ENCODE measurements at regions of chr7 and their contacts with region 1.

Region 1: GRCh38 chr7:91880413-91881241 is at the start of gene MTERF1:
- DNase-seq: peak; percentile 88 to 97 (median 92)
- ATAC-seq: peak; percentile 95
- H3K4me3 ChIP-seq: peak within 1 kb of the TSS; percentile 78
- H3K4me3 Mint-ChIP-seq: peak within 1 kb of the TSS; percentile 96
- H3K27ac ChIP-seq: peak within 1 kb of the TSS; percentile 26 to 64
- H3K27ac Mint-ChIP-seq: peak within 1 kb of the TSS; percentile 87
- H3K4me1 ChIP-seq: peaks cover 20% of the 10 kb centered on the region
- H3K4me1 Mint-ChIP-seq: peaks cover 41% of the 10 kb centered on the region
- H3K27me3 ChIP-seq: no peaks in the 10 kb centered on the region
- H3K27me3 Mint-ChIP-seq: no peaks in the 10 kb centered on the region
- CTCF ChIP-seq: peak; percentile 98
- total RNA-seq, gene MTERF1: 11.0 to 11.9 TPM

Region 2: GRCh38 chr7:91082852-91083495 is 797.7 kb before region 1 on chr7:
- CTCF ChIA-PET with region 1: no interaction called
- POLR2A ChIA-PET with region 1: no interaction called
- intact Hi-C with region 1: loop called (anchors 2 to 5 kb)
- DNase-seq: peak in 4 of 14 experiments; percentile 8 to 47 (median 22)
- ATAC-seq: no peak
- H3K4me3 ChIP-seq: no peak overlapping the region
- H3K4me3 Mint-ChIP-seq: peak overlapping the region; percentile 30
- H3K27ac ChIP-seq: no peak overlapping the region
- H3K27ac Mint-ChIP-seq: peak overlapping the region; percentile 74
- H3K4me1 ChIP-seq: peaks cover 21% of the 10 kb centered on the region
- H3K4me1 Mint-ChIP-seq: peaks cover 36% of the 10 kb centered on the region
- H3K27me3 ChIP-seq: no peaks in the 10 kb centered on the region
- H3K27me3 Mint-ChIP-seq: no peaks in the 10 kb centered on the region
- CTCF ChIP-seq: peak; percentile 66

Region 3: DNA sequence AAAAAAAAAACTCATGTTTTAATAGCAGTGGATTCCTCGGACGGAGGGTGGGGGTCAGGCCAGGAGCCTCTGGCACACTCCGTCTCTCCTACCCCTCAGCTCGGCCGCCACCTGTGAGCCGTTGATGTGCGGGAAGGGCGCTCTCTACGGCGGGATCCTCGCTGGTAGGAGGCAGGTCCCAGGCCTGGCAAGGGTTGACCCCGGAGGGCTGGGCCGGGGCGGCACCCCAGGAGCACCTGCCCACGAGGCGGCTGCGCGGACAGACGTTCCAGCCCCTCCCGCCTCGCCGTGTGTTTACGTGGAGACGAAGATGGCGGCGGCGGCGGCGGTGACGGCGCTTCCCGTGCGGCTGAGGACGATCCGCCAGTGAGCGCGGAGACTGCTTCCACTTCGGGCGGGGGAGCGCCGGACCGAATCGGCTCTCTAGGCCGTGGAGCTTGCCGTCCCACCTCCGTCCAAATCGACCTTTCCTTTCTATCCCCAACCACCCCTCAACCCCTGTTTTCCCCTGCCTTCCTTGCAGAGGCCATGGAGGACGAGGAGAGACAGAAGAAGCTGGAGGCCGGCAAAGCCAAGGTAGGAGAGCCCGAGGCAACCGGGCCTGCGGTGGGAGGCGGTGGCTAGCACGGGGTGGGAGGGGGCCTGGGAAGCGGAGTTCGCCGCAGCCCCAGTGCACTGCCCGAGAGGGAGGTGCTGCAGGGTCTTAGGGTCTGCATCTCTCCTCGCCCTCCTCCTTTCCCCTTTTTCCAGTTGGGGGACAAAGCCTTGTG is 60.1 kb after region 1 on chr7 and contains the start of gene AKAP9:
- CTCF ChIA-PET with region 1: interaction called, 26 read pairs
- POLR2A ChIA-PET with region 1: interaction called, 47 read pairs
- intact Hi-C with region 1: loop called (anchors 1 to 2 kb)
- DNase-seq: peak; percentile 77 to 94 (median 84)
- ATAC-seq: peak; percentile 88
- H3K4me3 ChIP-seq: peak within 1 kb of the TSS; percentile 96
- H3K4me3 Mint-ChIP-seq: peak within 1 kb of the TSS; percentile 90
- H3K27ac ChIP-seq: peak within 1 kb of the TSS; percentile 82 to 93
- H3K27ac Mint-ChIP-seq: peak within 1 kb of the TSS; percentile 92
- H3K4me1 ChIP-seq: peaks cover 25% of the 10 kb centered on the region
- H3K4me1 Mint-ChIP-seq: peaks cover 49% of the 10 kb centered on the region
- H3K27me3 ChIP-seq: no peaks in the 10 kb centered on the region
- H3K27me3 Mint-ChIP-seq: no peaks in the 10 kb centered on the region
- CTCF ChIP-seq: no peak
- total RNA-seq, gene AKAP9: 62.5 to 64.8 TPM

Region 4: GRCh38 chr7:92002720-92003119 is 122.1 kb after region 1 on chr7:
- CTCF ChIA-PET with region 1: no interaction called
- POLR2A ChIA-PET with region 1: no interaction called
- intact Hi-C with region 1: no loop called
- DNase-seq: no peak
- ATAC-seq: no peak
- H3K4me3 ChIP-seq: no peak overlapping the region
- H3K4me3 Mint-ChIP-seq: no peak overlapping the region
- H3K27ac ChIP-seq: no peak overlapping the region
- H3K27ac Mint-ChIP-seq: no peak overlapping the region
- H3K4me1 ChIP-seq: no peaks in the 10 kb centered on the region
- H3K4me1 Mint-ChIP-seq: no peaks in the 10 kb centered on the region
- H3K27me3 ChIP-seq: no peaks in the 10 kb centered on the region
- H3K27me3 Mint-ChIP-seq: no peaks in the 10 kb centered on the region
- CTCF ChIP-seq: no peak

Region 5: DNA sequence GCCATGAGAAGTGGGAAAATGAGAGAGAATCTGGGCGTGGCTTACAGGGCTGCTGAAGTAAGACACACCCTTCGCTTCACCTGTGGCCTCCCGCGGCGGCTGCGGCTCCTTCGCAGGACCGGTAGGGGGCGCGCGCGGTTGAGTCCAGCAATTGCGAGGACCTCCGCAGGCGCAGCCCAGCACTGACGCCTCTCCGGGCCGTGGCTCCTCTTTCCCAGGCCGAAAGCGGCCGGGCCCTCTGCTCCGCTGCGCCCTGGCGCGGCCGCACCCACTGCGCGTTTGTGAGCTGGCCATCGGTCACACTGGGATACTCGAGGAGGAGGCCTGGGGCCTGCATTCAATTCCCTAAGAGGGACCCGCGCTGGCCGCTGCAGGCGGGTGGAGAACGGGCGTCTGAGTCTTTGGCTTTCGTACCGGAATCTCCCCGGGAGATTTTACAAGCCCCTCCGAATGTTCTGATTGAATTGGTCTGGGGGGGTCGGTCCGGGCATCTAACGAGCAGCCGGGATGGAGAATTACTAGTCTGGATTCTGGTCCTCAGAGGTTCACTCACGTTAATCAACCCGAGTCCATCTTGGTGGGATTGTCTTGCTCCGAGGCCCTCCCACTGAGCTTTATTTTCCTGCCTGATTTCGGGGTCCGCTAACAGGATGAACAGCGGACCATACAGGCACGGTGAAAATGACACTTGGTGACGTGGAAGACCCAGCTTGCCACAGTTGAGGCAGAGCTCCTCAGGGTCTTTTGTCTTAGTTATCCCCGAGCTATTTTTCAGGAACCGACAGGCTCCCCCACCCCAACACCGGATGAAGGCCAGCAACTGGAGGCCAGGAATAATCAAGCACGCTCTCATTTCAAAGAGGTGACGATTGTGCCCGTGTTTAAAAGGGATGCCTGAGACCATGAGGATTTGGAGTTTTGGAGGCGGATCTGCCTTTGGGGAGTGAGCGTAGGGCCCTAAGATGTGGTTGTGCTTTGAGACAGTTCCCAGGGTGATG is 298.6 kb after region 1 on chr7 and contains the start of gene LRRD1:
- CTCF ChIA-PET with region 1: no interaction called
- POLR2A ChIA-PET with region 1: no interaction called
- intact Hi-C with region 1: loop called in 1 of 2 experiments (anchors 5 kb)
- DNase-seq: peak; percentile 78 to 93 (median 88)
- ATAC-seq: peak; percentile 99
- H3K4me3 ChIP-seq: peak within 1 kb of the TSS; percentile 58
- H3K4me3 Mint-ChIP-seq: peak within 1 kb of the TSS; percentile 84
- H3K27ac ChIP-seq: no peak within 1 kb of the TSS
- H3K27ac Mint-ChIP-seq: no peak within 1 kb of the TSS
- H3K4me1 ChIP-seq: peaks cover 11% of the 10 kb centered on the region
- H3K4me1 Mint-ChIP-seq: peaks cover 14% of the 10 kb centered on the region
- H3K27me3 ChIP-seq: peaks cover 0 to 2% of the 10 kb centered on the region in 2 experiments
- H3K27me3 Mint-ChIP-seq: peaks cover 7% of the 10 kb centered on the region
- CTCF ChIP-seq: peak; percentile 98
- total RNA-seq, gene LRRD1: not detected

Region 6: DNA sequence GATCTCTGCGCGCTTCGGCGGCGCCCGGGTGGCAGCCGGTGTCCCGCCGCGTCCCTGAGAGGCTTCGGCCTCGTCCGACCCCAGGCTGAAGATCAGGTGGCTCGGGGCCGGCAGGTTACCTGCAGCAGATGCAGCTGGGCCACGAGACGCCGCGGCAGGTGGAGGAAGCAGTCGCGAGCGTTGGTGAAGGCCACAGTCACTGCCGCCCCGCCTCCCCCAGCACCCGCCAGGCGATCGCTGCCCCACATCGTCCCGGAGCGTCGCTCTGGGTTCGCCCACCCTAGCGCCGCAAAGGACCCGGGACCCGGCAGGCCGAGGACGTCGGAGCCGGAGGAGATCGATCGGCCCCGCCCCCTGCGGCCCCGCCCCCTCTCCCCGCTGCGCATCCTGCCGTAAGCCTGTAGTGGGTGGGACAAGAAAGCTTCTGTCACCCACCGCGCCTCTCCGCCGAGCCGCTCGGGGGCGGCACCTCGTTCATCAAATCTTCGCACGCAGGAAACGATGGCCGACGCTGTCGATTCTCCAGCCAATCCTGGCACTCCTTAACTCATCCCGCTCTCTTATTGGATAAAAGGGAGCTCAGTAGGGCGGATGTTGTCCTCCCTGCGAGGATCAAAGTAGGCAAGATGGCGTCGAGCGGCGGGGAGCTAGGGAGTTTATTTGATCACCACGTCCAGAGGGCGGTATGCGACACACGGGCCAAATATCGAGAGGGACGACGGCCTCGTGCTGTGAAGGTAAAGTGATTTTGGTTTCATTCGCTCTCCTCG is 647.7 kb after region 1 on chr7 and contains the starts of genes PEX1 and RBM48:
- CTCF ChIA-PET with region 1: no interaction called
- POLR2A ChIA-PET with region 1: interaction called, 6 read pairs
- intact Hi-C with region 1: loop called (anchors 2 to 5 kb)
- DNase-seq: peak; percentile 89 to 99 (median 94)
- ATAC-seq: peak; percentile 92
- H3K4me3 ChIP-seq: peak within 1 kb of the TSS; percentile 94
- H3K4me3 Mint-ChIP-seq: peak within 1 kb of the TSS; percentile 96
- H3K27ac ChIP-seq: peak within 1 kb of the TSS; percentile 86 to 97
- H3K27ac Mint-ChIP-seq: peak within 1 kb of the TSS; percentile 94
- H3K4me1 ChIP-seq: peaks cover 19% of the 10 kb centered on the region
- H3K4me1 Mint-ChIP-seq: peaks cover 52% of the 10 kb centered on the region
- H3K27me3 ChIP-seq: no peaks in the 10 kb centered on the region
- H3K27me3 Mint-ChIP-seq: no peaks in the 10 kb centered on the region
- CTCF ChIP-seq: peak; percentile 42
- total RNA-seq, gene PEX1: 19.7 to 20.7 TPM
- total RNA-seq, gene RBM48: 45.4 to 47.3 TPM

Region 7: DNA sequence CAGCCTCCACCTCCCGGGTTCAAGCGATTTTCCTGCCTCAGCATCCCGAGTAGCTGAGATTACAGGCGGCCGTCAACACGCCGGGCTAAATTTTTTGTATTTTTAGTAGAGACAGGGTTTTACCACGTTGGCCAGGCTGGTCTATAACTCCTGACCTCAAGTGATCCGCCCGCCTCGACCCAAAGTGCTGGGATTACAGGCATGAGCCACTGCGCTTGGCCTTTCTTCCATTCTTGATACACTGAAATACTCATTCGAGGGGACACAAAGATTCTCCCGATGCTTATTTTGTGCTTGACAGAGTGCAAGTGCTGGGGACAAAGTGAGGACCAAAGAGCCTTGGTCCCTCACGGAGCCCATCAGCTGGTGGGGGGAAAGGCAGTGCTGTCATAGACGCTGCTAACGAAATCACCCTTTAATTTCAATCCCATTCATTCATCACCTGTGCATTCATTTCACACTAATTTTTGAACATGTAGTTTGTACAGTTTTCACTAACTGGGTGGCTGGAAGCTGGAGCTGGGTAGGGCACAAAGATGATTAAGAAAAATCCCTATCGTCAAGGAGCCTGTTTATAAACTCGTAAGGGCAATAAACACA is 710.2 kb after region 1 on chr7:
- CTCF ChIA-PET with region 1: no interaction called
- POLR2A ChIA-PET with region 1: no interaction called
- intact Hi-C with region 1: loop called in 1 of 2 experiments (anchors 2 kb)
- DNase-seq: peak in 3 of 14 experiments; percentile 6 to 24 (median 7)
- ATAC-seq: no peak
- H3K4me3 ChIP-seq: peak overlapping the region; percentile 85
- H3K4me3 Mint-ChIP-seq: peak overlapping the region; percentile 91
- H3K27ac ChIP-seq: no peak overlapping the region
- H3K27ac Mint-ChIP-seq: peak overlapping the region; percentile 95
- H3K4me1 ChIP-seq: peaks cover 30% of the 10 kb centered on the region
- H3K4me1 Mint-ChIP-seq: peaks cover 52% of the 10 kb centered on the region
- H3K27me3 ChIP-seq: no peaks in the 10 kb centered on the region
- H3K27me3 Mint-ChIP-seq: no peaks in the 10 kb centered on the region
- CTCF ChIP-seq: no peak

Measured in CD4-positive, alpha-beta T cell (primary cell).